Activated naive CD4-positive, alpha-beta T cell treated with anti-CD3 and anti-CD28 coated beads for 36 hours (primary cell): ENCODE measurements at regions of chr19 and their contacts with region 1.

Region 1: GRCh38 chr19:17555480-17555928 is at the start of gene COLGALT1:
- DNase-seq: peak; percentile 99
- H3K4me3 Mint-ChIP-seq: peak within 1 kb of the TSS; percentile 74
- H3K27ac Mint-ChIP-seq: no peak within 1 kb of the TSS
- H3K4me1 Mint-ChIP-seq: peaks cover 16% of the 10 kb centered on the region
- H3K27me3 Mint-ChIP-seq: no peaks in the 10 kb centered on the region
- total RNA-seq, gene COLGALT1: 36.8 to 37.3 TPM

Region 2: GRCh38 chr19:17226002-17226933 is 329.2 kb before region 1 on chr19 and contains the start of gene OCEL1:
- CTCF ChIA-PET with region 1: no interaction called
- intact Hi-C with region 1: loop called (anchors 1 kb)
- DNase-seq: peak; percentile 98
- H3K4me3 Mint-ChIP-seq: peak within 1 kb of the TSS; percentile 83
- H3K27ac Mint-ChIP-seq: peak within 1 kb of the TSS; percentile 90
- H3K4me1 Mint-ChIP-seq: peaks cover 5% of the 10 kb centered on the region
- H3K27me3 Mint-ChIP-seq: no peaks in the 10 kb centered on the region
- total RNA-seq, gene OCEL1: 8.7 to 9.3 TPM

Region 3: GRCh38 chr19:17511724-17512573 is 43.6 kb before region 1 on chr19:
- CTCF ChIA-PET with region 1: no interaction called
- intact Hi-C with region 1: loop called (anchors 1 kb)
- DNase-seq: peak; percentile 85
- H3K4me3 Mint-ChIP-seq: peak overlapping the region; percentile 93
- H3K27ac Mint-ChIP-seq: peak overlapping the region; percentile 73
- H3K4me1 Mint-ChIP-seq: peaks cover 37% of the 10 kb centered on the region
- H3K27me3 Mint-ChIP-seq: no peaks in the 10 kb centered on the region

Region 4: GRCh38 chr19:17539238-17540117 is 16.0 kb before region 1 on chr19:
- CTCF ChIA-PET with region 1: interaction called, 3 read pairs
- intact Hi-C with region 1: loop called (anchors 1 kb)
- DNase-seq: peak; percentile 97
- H3K4me3 Mint-ChIP-seq: peak overlapping the region; percentile 69
- H3K27ac Mint-ChIP-seq: no peak overlapping the region
- H3K4me1 Mint-ChIP-seq: peaks cover 10% of the 10 kb centered on the region
- H3K27me3 Mint-ChIP-seq: peaks cover 6% of the 10 kb centered on the region

Region 5: DNA sequence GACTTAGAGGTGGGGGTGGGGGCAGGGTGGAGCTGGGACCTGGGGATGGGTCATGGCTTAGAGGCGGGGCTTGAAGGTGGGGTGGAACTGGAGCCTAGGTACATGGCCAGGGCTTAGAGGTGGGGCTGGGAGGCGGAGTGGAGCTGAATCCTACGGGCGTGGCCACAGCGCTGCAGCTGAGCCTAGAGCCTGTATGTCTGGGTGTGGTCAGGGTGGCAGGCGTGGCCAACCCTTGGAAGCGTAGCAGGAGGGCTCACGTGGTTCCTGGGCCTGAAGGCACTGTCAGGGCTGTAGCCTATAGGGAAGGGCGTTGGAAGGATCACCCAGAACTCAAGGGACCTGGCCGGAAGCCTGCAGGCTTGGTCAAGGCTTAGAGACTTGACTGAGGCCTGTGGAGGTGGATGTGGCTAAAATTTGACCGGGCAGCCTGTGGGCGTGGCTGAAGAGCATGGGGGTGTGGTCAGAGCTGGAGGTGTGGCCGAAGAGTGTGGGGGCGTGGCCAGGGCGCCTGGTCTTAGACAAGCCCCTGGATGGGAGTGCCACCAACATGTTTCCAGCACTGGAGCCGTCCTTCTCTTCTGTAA is 24.2 kb after region 1 on chr19:
- CTCF ChIA-PET with region 1: interaction called, 18 read pairs
- intact Hi-C with region 1: loop called (anchors 1 kb)
- DNase-seq: no peak
- H3K4me3 Mint-ChIP-seq: no peak overlapping the region
- H3K27ac Mint-ChIP-seq: no peak overlapping the region
- H3K4me1 Mint-ChIP-seq: no peaks in the 10 kb centered on the region
- H3K27me3 Mint-ChIP-seq: no peaks in the 10 kb centered on the region

Region 6: DNA sequence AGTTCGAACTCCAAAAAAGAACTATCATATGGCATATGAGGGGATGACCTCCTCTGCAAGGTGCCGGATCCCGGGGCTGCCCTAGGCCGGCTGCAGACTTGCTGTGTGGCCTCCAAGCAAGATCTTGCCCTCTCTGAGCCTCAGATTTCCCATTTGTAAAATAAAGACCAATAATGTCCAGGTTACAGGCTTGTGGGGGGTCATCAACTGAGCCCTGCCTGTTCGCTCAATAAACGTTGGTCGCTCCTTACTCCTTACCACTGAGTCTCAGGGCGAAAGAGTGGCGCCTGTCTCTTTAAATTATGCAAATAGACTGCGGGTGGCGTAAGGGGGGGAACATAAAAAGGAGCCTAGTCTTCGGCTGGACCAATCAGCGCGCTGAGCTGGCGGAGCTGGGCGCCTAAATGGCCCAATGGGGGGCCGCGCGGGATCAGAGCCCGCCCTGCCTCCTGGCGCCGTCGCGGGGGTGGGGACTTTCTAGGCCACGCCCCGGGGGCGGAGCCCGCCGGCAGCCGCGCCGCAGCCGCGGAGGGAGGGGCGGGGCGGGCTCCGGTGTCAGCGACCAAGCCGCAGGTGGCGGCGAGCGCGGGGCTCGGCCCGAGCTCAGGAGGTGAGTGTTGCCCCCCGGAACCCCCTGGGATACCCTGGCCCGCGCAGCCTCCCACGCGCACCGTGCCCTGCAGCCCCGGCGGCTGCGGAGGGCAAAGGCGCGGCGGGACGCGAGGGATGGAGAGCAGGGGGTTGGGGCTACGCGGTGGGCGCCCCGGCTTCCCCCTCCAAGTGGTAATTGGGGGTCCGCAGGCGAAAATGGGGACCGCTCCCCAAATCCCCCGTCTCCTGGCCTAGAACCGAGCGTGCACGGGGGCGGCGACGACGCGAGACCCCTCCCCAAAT is 191.9 kb after region 1 on chr19:
- CTCF ChIA-PET with region 1: no interaction called
- intact Hi-C with region 1: loop called (anchors 1 kb)
- DNase-seq: peak; percentile 97
- H3K4me3 Mint-ChIP-seq: peak overlapping the region; percentile 63
- H3K27ac Mint-ChIP-seq: peak overlapping the region; percentile 56
- H3K4me1 Mint-ChIP-seq: peaks cover 40% of the 10 kb centered on the region
- H3K27me3 Mint-ChIP-seq: no peaks in the 10 kb centered on the region